ACHN (cell line): ENCODE measurements at regions of chr14 and their contacts with region 1.

Region 1: DNA sequence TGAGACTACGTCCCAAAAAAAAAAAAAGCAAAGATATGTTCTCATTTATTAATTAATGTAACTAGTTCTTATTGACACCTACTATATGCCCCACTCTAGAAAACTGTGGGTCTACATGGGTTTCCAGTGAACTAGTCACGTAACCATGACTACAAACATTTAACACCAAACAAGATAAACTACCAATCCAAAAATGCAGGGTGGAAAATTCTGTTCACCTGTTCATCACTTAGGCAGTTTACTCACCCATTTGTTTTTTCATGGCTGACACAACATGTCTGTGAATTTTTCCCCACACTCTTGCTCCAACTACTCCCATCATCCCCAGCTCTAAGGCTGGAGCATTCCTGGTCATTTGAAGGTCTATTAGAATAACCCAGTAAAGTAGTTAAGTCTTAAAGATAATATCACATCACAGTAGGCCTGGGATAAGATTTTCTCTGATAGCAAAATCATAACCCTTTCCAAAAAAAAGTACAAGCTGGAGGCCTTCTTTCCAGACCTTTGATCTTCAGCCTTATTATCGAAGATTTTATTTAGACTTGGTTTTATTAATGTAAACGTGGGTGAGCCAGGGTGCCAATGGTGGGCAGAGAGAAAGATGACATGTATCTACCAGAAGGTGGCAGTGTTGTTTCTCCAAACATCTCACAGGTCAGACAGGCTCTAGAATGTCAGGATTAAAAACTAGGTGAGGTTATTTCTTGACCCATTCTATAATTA is 61.6 kb upstream of the DAAM1 start:
- DNase-seq: peak; percentile 57

Region 2: GRCh38 chr14:59245809-59246295 is 119.0 kb after region 1 on chr14:
- in situ Hi-C with region 1: no loop called
- DNase-seq: no peak

Region 3: GRCh38 chr14:59428581-59429012 is 301.7 kb after region 1 on chr14:
- in situ Hi-C with region 1: loop called (anchors 25 kb)
- DNase-seq: no peak